ENCODE measurements at regions of chr3 and their contacts with region 1.

Region 1: DNA sequence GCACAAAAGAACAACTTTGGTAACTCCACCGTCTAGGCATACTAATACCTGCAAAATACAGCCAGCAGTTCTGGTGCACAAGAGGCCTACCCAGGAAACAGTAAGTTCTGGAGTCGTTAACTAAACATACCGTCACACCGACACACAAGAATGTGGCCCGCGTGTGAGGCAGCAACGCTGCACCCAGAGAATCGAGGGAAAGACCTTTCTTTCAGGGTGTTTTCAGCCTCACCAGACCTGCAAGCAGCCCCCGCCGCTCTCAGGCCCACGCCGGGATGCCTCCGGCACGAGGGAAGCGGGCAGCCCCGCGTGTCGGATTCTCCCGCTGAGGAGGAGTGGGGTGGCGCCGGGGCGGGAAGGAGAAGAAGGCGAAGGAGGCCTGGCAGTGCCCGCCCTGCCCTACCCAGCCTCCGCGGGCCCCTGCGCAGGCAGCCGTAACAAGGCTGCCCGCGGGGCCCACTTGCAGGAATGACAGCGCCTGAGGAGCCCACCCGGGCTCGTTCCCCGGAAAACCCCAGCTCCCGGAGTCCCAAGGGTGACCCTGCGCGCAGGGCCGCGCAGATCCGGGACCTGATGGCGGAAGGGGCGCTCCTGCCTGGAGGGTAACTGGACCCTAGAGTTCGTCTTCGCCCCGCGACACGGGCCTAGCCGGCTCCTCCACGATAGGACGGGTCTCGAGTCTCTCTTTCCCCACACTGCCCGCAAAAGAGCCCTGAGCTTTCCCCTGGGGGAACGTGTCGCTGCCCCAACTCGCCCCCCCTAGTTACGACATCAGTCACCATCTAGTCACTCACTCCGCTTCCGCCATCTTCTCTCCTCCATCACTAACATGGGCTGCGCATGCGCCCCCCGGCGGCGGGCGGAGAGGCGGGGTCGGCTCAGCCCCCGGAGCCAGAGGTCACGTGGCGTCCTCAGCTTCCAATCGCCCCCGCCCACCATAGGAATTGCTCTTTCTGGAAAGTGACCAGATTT is at the start of gene PHC3:
- DNase-seq: peak; percentile 77 to 96 (median 91)
- ATAC-seq: peak; percentile 67
- H3K4me3 ChIP-seq: peak within 1 kb of the TSS; percentile 84 to 98
- H3K4me3 Mint-ChIP-seq: peak within 1 kb of the TSS; percentile 99
- H3K27ac ChIP-seq: peak within 1 kb of the TSS; percentile 98 to 99
- H3K27ac Mint-ChIP-seq: peak within 1 kb of the TSS; percentile 100
- H3K4me1 ChIP-seq: peaks cover 31% of the 10 kb centered on the region
- H3K4me1 Mint-ChIP-seq: peaks cover 38% of the 10 kb centered on the region
- H3K27me3 ChIP-seq: no peaks in the 10 kb centered on the region
- H3K27me3 Mint-ChIP-seq: no peaks in the 10 kb centered on the region
- CTCF ChIP-seq: no peak
- total RNA-seq, gene PHC3: 131 to 136 TPM

Region 2: DNA sequence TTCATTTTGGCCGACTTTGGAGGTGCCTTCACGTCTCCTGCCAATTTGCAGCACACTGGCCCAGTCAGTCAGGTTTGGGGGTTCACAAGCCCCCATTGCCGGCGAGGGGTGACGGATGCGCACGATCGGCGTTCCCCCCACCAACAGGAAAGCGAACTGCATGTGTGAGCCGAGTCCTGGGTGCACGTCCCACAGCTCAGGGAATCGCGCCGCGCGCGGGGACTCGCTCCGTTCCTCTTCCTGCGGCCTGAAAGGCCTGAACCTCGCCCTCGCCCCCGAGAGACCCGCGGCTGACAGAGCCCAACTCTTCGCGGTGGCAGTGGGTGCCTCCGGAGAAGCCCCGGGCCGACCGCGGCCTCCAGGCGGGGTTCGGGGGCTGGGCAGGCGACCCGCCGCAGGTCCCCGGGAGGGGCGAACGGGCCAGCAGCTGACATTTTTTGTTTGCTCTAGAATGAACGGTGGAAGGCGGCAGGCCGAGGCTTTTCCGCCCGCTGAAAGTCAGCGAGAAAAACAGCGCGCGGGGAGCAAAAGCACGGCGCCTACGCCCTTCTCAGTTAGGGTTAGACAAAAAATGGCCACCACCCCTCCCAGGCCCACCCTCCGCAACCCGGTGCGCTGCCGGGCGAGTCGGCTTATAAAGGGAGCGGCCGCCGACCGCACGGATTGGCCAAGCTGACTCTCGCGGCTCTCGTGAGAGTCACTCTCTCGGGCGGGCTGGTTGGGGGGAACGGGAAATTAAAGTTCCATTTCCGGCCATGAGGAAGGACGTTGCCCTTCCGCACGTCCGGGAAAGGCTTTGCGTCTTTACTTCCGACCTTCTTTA is 416.5 kb before region 1 on chr3 and contains the start of gene TERC:
- CTCF ChIA-PET with region 1: no interaction called
- POLR2A ChIA-PET with region 1: interaction called, 3 read pairs
- intact Hi-C with region 1: loop called in 1 of 2 experiments (anchors 2 kb)
- DNase-seq: peak; percentile 84 to 98 (median 93)
- ATAC-seq: peak; percentile 84
- H3K4me3 ChIP-seq: peak within 1 kb of the TSS; percentile 79 to 81
- H3K4me3 Mint-ChIP-seq: peak within 1 kb of the TSS; percentile 96
- H3K27ac ChIP-seq: peak within 1 kb of the TSS; percentile 91 to 93
- H3K27ac Mint-ChIP-seq: peak within 1 kb of the TSS; percentile 98
- H3K4me1 ChIP-seq: peaks cover 14% of the 10 kb centered on the region
- H3K4me1 Mint-ChIP-seq: peaks cover 25% of the 10 kb centered on the region
- H3K27me3 ChIP-seq: no peaks in the 10 kb centered on the region
- H3K27me3 Mint-ChIP-seq: no peaks in the 10 kb centered on the region
- CTCF ChIP-seq: no peak
- total RNA-seq, gene TERC: 12.7 to 13.3 TPM

Region 3: DNA sequence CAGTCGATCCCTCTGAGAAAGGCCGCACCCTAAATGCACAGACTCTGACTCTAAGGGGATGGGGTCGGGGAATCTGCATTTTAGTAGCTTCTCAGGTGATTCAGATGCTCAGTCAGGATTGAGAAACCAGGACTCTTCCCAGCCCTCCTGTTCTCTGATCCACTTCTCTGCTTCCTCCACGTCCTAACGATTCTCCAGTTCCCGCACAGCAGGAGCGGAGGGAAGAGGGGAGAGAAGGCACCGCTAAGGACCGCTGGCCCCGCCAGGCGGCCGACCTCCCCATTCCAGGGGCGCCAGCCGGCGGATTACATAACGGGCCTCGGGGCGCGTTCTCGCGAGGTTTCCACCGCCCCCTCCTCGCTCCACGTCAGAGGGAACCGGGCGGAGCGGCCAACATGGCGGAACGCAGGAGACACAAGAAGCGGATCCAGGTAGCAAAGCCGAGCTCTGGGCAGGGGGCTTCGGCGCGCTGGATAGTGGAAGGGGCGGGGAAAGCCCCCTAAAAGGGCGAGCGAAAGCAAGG is 214.7 kb before region 1 on chr3 and contains the start of gene SEC62:
- CTCF ChIA-PET with region 1: no interaction called
- POLR2A ChIA-PET with region 1: no interaction called
- intact Hi-C with region 1: loop called (anchors 1 to 2 kb)
- DNase-seq: peak; percentile 88 to 96 (median 95)
- ATAC-seq: peak; percentile 87
- H3K4me3 ChIP-seq: peak within 1 kb of the TSS; percentile 84 to 87
- H3K4me3 Mint-ChIP-seq: peak within 1 kb of the TSS; percentile 90
- H3K27ac ChIP-seq: peak within 1 kb of the TSS; percentile 94 to 96
- H3K27ac Mint-ChIP-seq: peak within 1 kb of the TSS; percentile 99
- H3K4me1 ChIP-seq: peaks cover 42% of the 10 kb centered on the region
- H3K4me1 Mint-ChIP-seq: peaks cover 54% of the 10 kb centered on the region
- H3K27me3 ChIP-seq: no peaks in the 10 kb centered on the region
- H3K27me3 Mint-ChIP-seq: no peaks in the 10 kb centered on the region
- CTCF ChIP-seq: no peak
- total RNA-seq, gene SEC62: 115 TPM

Region 4: GRCh38 chr3:170154569-170155143 is 26.5 kb before region 1 on chr3:
- CTCF ChIA-PET with region 1: no interaction called
- POLR2A ChIA-PET with region 1: interaction called, 4 read pairs
- intact Hi-C with region 1: loop called in 1 of 2 experiments (anchors 2 kb)
- DNase-seq: peak in 1 of 9 experiments; percentile 29
- ATAC-seq: peak; percentile 78
- H3K4me3 ChIP-seq: no peak overlapping the region
- H3K4me3 Mint-ChIP-seq: peak overlapping the region; percentile 74
- H3K27ac ChIP-seq: peak overlapping the region in 1 of 2 experiments; percentile 61
- H3K27ac Mint-ChIP-seq: peak overlapping the region; percentile 96
- H3K4me1 ChIP-seq: peaks cover 38% of the 10 kb centered on the region
- H3K4me1 Mint-ChIP-seq: peaks cover 58% of the 10 kb centered on the region
- H3K27me3 ChIP-seq: no peaks in the 10 kb centered on the region
- H3K27me3 Mint-ChIP-seq: no peaks in the 10 kb centered on the region
- CTCF ChIP-seq: no peak

Region 5: GRCh38 chr3:170277833-170278580 is 96.8 kb after region 1 on chr3:
- CTCF ChIA-PET with region 1: no interaction called
- POLR2A ChIA-PET with region 1: no interaction called
- intact Hi-C with region 1: loop called in 1 of 2 experiments (anchors 5 kb)
- DNase-seq: peak in 2 of 9 experiments; percentile 23 to 41
- ATAC-seq: peak; percentile 37
- H3K4me3 ChIP-seq: peak overlapping the region; percentile 26 to 27
- H3K4me3 Mint-ChIP-seq: peak overlapping the region; percentile 81
- H3K27ac ChIP-seq: peak overlapping the region; percentile 12 to 49
- H3K27ac Mint-ChIP-seq: peak overlapping the region; percentile 76
- H3K4me1 ChIP-seq: peaks cover 6% of the 10 kb centered on the region
- H3K4me1 Mint-ChIP-seq: peaks cover 20% of the 10 kb centered on the region
- H3K27me3 ChIP-seq: no peaks in the 10 kb centered on the region
- H3K27me3 Mint-ChIP-seq: no peaks in the 10 kb centered on the region
- CTCF ChIP-seq: no peak

Region 6: GRCh38 chr3:170869645-170870593 is 688.7 kb after region 1 on chr3 and contains the start of gene RPL22L1:
- CTCF ChIA-PET with region 1: no interaction called
- POLR2A ChIA-PET with region 1: no interaction called
- intact Hi-C with region 1: loop called (anchors 5 kb)
- DNase-seq: peak; percentile 85 to 97 (median 93)
- ATAC-seq: peak; percentile 93
- H3K4me3 ChIP-seq: peak within 1 kb of the TSS; percentile 73 to 77
- H3K4me3 Mint-ChIP-seq: peak within 1 kb of the TSS; percentile 94
- H3K27ac ChIP-seq: peak within 1 kb of the TSS; percentile 84 to 94
- H3K27ac Mint-ChIP-seq: peak within 1 kb of the TSS; percentile 97
- H3K4me1 ChIP-seq: peaks cover 27% of the 10 kb centered on the region
- H3K4me1 Mint-ChIP-seq: peaks cover 28% of the 10 kb centered on the region
- H3K27me3 ChIP-seq: no peaks in the 10 kb centered on the region
- H3K27me3 Mint-ChIP-seq: no peaks in the 10 kb centered on the region
- CTCF ChIP-seq: no peak
- total RNA-seq, gene RPL22L1: 54.3 to 56.8 TPM

Measured in CD8-positive, alpha-beta T cell (primary cell).